GM12878 (cell line): ENCODE measurements at regions of chr10 and their contacts with region 1.

Region 1: DNA sequence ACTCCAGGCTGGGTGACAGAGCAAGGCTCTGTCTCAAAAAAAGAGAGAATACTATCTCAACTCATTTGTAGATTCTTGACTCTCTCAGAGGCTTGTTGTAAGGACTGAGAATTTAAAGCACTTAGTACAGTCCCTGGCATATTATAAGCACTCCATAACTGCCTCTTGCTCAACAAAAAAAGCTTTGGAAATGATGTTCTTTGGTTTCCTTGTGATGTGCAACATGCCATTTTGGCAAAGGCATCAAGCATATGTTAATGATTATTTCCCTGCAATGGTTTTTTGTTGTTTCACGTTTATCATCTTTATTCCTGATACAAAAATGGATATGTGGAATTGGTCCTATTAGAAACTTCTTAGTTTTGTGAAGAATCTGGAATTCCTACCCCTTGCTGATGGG is 15.7 kb downstream of the NOLC1 start:
- DNase-seq: no peak
- ATAC-seq: no peak
- H3K4me3 ChIP-seq: no peak overlapping the region
- H3K27ac ChIP-seq: no peak overlapping the region
- H3K4me1 ChIP-seq: peaks cover 4% of the 10 kb centered on the region
- H3K27me3 ChIP-seq: no peaks in the 10 kb centered on the region
- CTCF ChIP-seq: no peak
- EP300 ChIP-seq: no peak
- POLR2A ChIP-seq: no peak
- RAD21 ChIP-seq: no peak

Region 2: GRCh38 chr10:102132563-102133372 is 35.1 kb before region 1 on chr10 and contains the start of gene PPRC1:
- CTCF ChIA-PET with region 1: interaction called, 11 read pairs
- POLR2A ChIA-PET with region 1: no interaction called
- RAD21 ChIA-PET with region 1: interaction called, 3 read pairs
- SMC1A ChIA-PET with region 1: interaction called, 3 read pairs
- in situ Hi-C with region 1: no loop called
- intact Hi-C with region 1: no loop called
- DNase-seq: peak; percentile 97
- ATAC-seq: peak; percentile 95
- H3K4me3 ChIP-seq: peak within 1 kb of the TSS; percentile 93
- H3K27ac ChIP-seq: peak within 1 kb of the TSS; percentile 75
- H3K4me1 ChIP-seq: peaks cover 10% of the 10 kb centered on the region
- H3K27me3 ChIP-seq: no peaks in the 10 kb centered on the region
- CTCF ChIP-seq: peak; percentile 87 to 98 (median 88)
- EP300 ChIP-seq: 0 out of 4 replicates have a peak, but pooled peaks of 1 of the 2 experiments have one; percentile 18
- POLR2A ChIP-seq: peak; percentile 91
- RAD21 ChIP-seq: peak; percentile 69
- polyA plus RNA-seq, gene PPRC1: 13.1 to 15.2 TPM

Region 3: GRCh38 chr10:102151774-102152544 is 15.9 kb before region 1 on chr10 and contains the start of gene NOLC1:
- CTCF ChIA-PET with region 1: interaction called, 38 read pairs
- POLR2A ChIA-PET with region 1: interaction called, 4 read pairs
- RAD21 ChIA-PET with region 1: interaction called, 5 read pairs
- SMC1A ChIA-PET with region 1: interaction called, 6 read pairs
- in situ Hi-C with region 1: no loop called
- intact Hi-C with region 1: no loop called
- DNase-seq: peak; percentile 98
- ATAC-seq: peak; percentile 96
- H3K4me3 ChIP-seq: peak within 1 kb of the TSS; percentile 94
- H3K27ac ChIP-seq: peak within 1 kb of the TSS; percentile 83
- H3K4me1 ChIP-seq: peaks cover 9% of the 10 kb centered on the region
- H3K27me3 ChIP-seq: no peaks in the 10 kb centered on the region
- CTCF ChIP-seq: no peak
- EP300 ChIP-seq: peak; percentile 48 to 57; a peak in 1 of 4 replicates
- POLR2A ChIP-seq: peak; percentile 99
- RAD21 ChIP-seq: no peak
- polyA plus RNA-seq, gene NOLC1: 91.7 to 103 TPM

Region 4: DNA sequence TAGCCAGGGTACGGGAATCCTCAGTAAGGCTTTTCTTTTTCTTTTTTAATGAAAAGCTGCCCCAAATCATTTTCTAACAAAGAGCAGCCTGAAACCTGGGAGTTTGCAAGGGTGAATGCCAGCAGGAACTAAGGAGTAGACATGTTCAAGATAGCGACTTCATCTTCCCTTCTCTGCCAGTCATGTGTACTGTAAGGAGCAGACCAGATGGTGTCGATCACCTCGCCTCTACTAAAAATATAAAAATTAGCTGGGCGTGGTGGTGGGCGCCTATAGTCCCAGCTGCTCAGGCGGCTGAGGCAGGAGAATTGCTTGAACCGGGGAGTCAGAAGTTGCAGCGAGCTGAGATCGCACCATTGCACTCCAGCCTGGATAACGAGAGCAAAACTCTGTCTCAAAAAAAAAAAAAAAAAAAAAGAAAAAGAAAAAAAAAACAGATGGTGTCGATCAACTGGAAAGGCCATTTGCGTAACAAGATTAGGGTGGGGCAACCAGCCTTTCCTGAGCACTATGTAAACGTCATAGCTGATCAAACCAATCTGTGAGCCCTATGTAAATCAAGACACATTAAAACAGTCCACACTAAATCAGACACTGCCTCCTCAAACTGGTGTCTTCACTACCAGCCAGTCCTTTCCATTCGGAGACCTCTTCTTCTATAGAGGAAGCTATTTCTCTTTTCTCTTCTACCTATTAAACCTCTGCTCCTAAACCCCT is 18.1 kb after region 1 on chr10:
- CTCF ChIA-PET with region 1: interaction called, 61 read pairs
- POLR2A ChIA-PET with region 1: interaction called, 11 read pairs
- RAD21 ChIA-PET with region 1: interaction called, 7 read pairs
- SMC1A ChIA-PET with region 1: interaction called, 4 read pairs
- in situ Hi-C with region 1: no loop called
- intact Hi-C with region 1: no loop called
- DNase-seq: no peak
- ATAC-seq: no peak
- H3K4me3 ChIP-seq: no peak overlapping the region
- H3K27ac ChIP-seq: no peak overlapping the region
- H3K4me1 ChIP-seq: peaks cover 11% of the 10 kb centered on the region
- H3K27me3 ChIP-seq: no peaks in the 10 kb centered on the region
- CTCF ChIP-seq: no peak
- EP300 ChIP-seq: no peak
- POLR2A ChIP-seq: no peak
- RAD21 ChIP-seq: no peak

Region 5: GRCh38 chr10:102211615-102212299 is 43.9 kb after region 1 on chr10:
- CTCF ChIA-PET with region 1: interaction called, 13 read pairs
- POLR2A ChIA-PET with region 1: no interaction called
- RAD21 ChIA-PET with region 1: interaction called, 3 read pairs
- SMC1A ChIA-PET with region 1: interaction called, 4 read pairs
- in situ Hi-C with region 1: no loop called
- intact Hi-C with region 1: no loop called
- DNase-seq: no peak
- ATAC-seq: peak; percentile 92
- H3K4me3 ChIP-seq: no peak overlapping the region
- H3K27ac ChIP-seq: no peak overlapping the region
- H3K4me1 ChIP-seq: no peaks in the 10 kb centered on the region; the same call in 1 of the 2 replicates
- H3K27me3 ChIP-seq: no peaks in the 10 kb centered on the region
- CTCF ChIP-seq: no peak
- EP300 ChIP-seq: no peak
- POLR2A ChIP-seq: no peak
- RAD21 ChIP-seq: no peak

Region 6: DNA sequence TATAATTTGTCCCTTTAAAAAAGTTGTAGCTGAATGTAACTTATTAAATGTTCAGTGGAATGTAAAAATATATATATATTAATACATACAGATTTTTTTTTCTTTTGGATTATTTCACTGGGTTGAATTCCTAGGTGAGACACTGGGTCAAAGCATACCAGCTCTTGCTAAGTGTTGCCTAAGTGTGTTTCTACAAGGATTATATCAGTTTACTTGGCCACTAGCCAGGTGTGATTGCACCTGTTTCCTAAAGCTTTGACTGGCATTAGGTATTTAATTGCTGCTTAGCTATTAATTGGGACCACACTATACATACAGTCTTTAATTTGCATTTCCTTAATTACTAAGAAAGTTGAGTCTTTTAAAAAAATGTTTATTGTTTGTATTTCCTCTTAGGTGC is 52.8 kb after region 1 on chr10:
- CTCF ChIA-PET with region 1: interaction called, 25 read pairs
- POLR2A ChIA-PET with region 1: interaction called, 5 read pairs
- RAD21 ChIA-PET with region 1: interaction called, 18 read pairs
- SMC1A ChIA-PET with region 1: interaction called, 5 read pairs
- in situ Hi-C with region 1: no loop called
- intact Hi-C with region 1: no loop called
- DNase-seq: no peak
- ATAC-seq: no peak
- H3K4me3 ChIP-seq: no peak overlapping the region
- H3K27ac ChIP-seq: no peak overlapping the region
- H3K4me1 ChIP-seq: no peaks in the 10 kb centered on the region
- H3K27me3 ChIP-seq: no peaks in the 10 kb centered on the region
- CTCF ChIP-seq: no peak
- EP300 ChIP-seq: no peak
- POLR2A ChIP-seq: no peak
- RAD21 ChIP-seq: no peak

Region 7: DNA sequence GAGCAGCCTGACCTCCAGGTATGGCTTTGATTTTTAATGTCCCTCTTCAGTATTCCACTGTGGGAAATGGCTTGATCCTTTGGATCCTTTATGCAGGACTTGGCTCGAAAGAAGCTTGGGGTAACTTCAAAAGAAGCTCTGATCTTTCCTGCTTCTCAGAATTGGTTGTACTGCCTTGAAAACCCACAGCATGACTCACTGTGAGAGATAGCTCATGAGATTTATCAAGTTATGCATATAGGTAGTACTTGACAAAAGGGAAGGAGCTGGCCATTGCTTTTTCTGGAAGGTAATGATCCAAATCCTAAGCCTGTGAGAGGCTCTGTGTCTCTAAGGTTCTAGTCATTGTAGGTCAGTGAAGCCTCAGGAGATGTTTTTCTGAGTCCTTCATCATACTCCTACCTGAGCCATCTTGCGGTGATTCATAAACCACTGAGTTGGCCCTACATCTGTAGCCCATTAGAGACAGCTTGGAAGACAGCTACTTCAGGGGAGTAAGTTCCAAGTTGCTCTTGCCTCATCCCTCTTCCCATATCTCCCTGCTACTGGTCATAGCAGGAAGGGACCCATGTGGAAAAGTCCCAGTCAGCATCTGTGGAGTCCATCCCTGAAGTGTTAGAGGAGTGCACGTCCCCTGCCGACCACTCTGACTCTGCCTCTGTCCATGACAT is 191.0 kb after region 1 on chr10:
- CTCF ChIA-PET with region 1: interaction called, 150 read pairs
- POLR2A ChIA-PET with region 1: no interaction called
- RAD21 ChIA-PET with region 1: interaction called, 52 read pairs
- SMC1A ChIA-PET with region 1: no interaction called
- in situ Hi-C with region 1: loop called (anchors 5 kb)
- intact Hi-C with region 1: no loop called
- DNase-seq: no peak
- ATAC-seq: no peak
- H3K4me3 ChIP-seq: no peak overlapping the region
- H3K27ac ChIP-seq: no peak overlapping the region
- H3K4me1 ChIP-seq: no peaks in the 10 kb centered on the region
- H3K27me3 ChIP-seq: no peaks in the 10 kb centered on the region
- CTCF ChIP-seq: no peak
- EP300 ChIP-seq: no peak
- POLR2A ChIP-seq: no peak
- RAD21 ChIP-seq: no peak

Region 8: GRCh38 chr10:102596506-102596971 is 428.7 kb after region 1 on chr10:
- CTCF ChIA-PET with region 1: no interaction called
- POLR2A ChIA-PET with region 1: no interaction called
- RAD21 ChIA-PET with region 1: no interaction called
- SMC1A ChIA-PET with region 1: no interaction called
- in situ Hi-C with region 1: no loop called
- intact Hi-C with region 1: no loop called
- DNase-seq: no peak
- ATAC-seq: peak; percentile 91
- H3K4me3 ChIP-seq: no peak overlapping the region
- H3K27ac ChIP-seq: no peak overlapping the region
- H3K4me1 ChIP-seq: no peaks in the 10 kb centered on the region
- H3K27me3 ChIP-seq: no peaks in the 10 kb centered on the region
- CTCF ChIP-seq: peak; percentile 89 to 92 (median 89); a peak in 5 of 6 replicates
- EP300 ChIP-seq: no peak
- POLR2A ChIP-seq: no peak
- RAD21 ChIP-seq: peak; percentile 72